Activated CD4-positive, alpha-beta T cell treated with anti-CD3 and anti-CD28 coated beads, Interleukin-2, amount 10 ng/mL, durations not matched to agents 7 days and 5 days (primary cell): ENCODE measurements at regions of chr2 and their contacts with region 1.

Region 1: DNA sequence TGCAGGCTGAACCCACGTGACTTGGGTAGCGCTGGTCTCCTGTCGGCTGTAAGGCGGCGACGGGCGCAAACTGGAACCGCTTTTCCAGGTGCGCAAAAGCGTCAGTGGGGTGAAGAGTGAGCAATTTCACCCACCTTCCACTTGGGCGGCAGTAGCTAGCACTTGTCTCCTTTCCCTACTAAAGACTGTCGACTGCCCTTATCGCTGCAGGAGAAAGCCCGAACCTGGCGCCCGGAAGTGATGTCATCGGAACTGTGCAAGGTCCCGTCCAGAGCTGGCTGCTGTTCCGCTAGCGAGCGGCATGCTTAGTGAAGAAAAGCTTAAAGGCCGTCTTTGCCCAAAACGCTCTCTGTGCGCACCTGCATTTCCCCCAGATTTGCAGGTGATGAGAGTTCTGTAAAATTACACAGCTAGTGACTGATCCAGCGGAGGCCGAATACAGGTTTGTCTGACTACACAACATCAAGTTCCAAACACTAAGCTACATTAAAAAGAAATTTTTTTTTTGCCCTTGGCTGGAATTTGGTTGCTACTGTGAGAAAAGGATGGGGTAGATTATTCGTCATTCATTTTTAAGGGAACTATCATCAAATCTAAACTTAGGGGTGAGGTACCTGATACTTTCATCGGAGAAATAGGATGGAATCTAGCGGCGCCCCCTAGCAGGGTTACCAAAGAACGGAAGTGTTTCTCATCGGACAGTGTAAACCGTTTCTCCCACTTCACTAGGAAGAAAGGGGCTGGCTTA is at the start of gene OSGEPL1:
- DNase-seq: peak; percentile 96
- H3K4me3 Mint-ChIP-seq: peak within 1 kb of the TSS; percentile 90
- H3K27ac Mint-ChIP-seq: peak within 1 kb of the TSS; percentile 98
- H3K4me1 Mint-ChIP-seq: peaks cover 18% of the 10 kb centered on the region
- H3K27me3 Mint-ChIP-seq: no peaks in the 10 kb centered on the region
- total RNA-seq, gene OSGEPL1: 7.7 to 7.8 TPM

Region 2: DNA sequence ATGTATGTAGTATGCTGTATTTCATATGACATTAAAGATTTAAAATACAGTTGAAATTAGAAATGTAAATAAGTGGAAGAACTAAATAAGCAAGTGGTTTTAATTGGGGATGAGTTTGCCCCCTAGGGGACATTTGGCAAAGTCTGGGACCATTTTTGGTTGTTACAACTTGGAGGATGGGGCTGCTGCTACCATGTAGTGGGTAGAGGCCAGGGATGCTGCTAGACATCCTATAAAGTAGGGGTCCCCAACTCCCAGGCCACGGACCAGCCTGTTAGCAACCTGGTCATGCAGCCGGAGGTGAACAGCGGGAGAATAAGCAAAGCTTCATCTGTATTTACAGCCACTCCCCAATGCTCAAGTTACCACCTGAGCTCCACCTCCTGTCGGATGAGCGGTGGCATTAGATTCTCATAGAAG is 129.3 kb before region 1 on chr2:
- CTCF ChIA-PET with region 1: no interaction called
- POLR2A ChIA-PET with region 1: no interaction called
- DNase-seq: peak; percentile 22
- H3K4me3 Mint-ChIP-seq: no peak overlapping the region
- H3K27ac Mint-ChIP-seq: no peak overlapping the region
- H3K4me1 Mint-ChIP-seq: peaks cover 4% of the 10 kb centered on the region
- H3K27me3 Mint-ChIP-seq: no peaks in the 10 kb centered on the region

Region 3: DNA sequence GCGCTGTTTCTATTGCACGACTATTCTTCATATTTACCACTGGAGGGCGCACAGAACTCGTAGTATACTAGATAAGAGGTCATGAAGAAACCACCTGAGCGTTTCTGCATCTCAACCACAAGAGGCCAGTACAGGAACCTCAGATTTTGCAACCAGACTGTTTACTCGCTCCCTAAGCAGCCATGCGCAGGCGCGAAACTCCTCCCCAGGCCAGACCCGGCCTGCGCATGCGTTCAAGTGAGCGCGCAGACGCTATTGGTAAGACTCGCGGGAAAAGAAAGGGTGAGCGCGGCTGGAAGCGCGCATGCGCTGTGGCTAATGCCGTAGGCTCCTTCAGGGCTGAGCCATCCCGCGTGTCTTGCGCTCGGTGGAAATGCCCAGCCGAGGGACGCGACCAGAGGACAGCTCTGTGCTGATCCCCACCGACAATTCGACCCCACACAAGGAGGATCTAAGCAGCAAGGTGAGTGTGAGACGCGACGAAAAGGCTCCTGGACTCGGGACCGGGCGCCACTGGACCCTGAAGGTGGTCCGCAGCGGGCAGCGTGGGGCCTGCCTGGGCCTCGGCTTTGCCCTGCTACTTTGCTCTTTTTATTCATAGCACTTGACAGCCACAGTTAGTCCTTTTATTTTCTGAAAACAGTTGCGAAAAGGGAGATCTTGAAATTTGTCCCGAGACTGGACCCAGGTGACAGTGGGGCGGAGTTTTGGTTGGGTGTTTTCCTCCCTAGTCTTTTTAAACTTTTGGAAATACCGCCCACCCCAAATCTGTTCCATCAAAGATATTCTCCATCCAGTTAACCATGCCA is 101.4 kb before region 1 on chr2 and contains the start of gene ASNSD1:
- CTCF ChIA-PET with region 1: interaction called, 37 read pairs
- POLR2A ChIA-PET with region 1: no interaction called
- DNase-seq: peak; percentile 99
- H3K4me3 Mint-ChIP-seq: no peak within 1 kb of the TSS
- H3K27ac Mint-ChIP-seq: no peak within 1 kb of the TSS
- H3K4me1 Mint-ChIP-seq: peaks cover 54% of the 10 kb centered on the region
- H3K27me3 Mint-ChIP-seq: no peaks in the 10 kb centered on the region
- total RNA-seq, gene ASNSD1: 34.8 to 40.3 TPM

Region 4: DNA sequence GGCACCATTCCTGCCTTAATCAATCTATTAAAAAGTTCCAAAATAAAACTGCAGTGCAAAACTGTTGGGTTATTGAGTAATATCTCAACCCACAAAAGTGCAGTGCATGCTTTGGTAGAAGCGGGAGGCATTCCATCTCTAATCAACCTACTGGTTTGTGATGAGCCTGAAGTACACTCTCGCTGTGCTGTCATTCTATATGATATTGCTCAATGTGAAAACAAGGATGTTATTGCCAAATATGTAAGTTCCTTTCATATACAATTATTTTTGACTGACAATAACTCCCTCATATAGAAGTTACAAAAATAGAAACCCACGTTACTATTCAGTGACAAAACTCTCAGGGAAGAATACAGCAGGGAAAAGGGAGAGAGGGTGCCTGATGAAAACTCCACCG is 43.2 kb before region 1 on chr2:
- CTCF ChIA-PET with region 1: no interaction called
- POLR2A ChIA-PET with region 1: no interaction called
- DNase-seq: no peak
- H3K4me3 Mint-ChIP-seq: no peak overlapping the region
- H3K27ac Mint-ChIP-seq: no peak overlapping the region
- H3K4me1 Mint-ChIP-seq: no peaks in the 10 kb centered on the region
- H3K27me3 Mint-ChIP-seq: no peaks in the 10 kb centered on the region

Region 5: GRCh38 chr2:189783927-189784867 is 21.5 kb after region 1 on chr2 and contains the starts of genes ORMDL1 and PMS1:
- CTCF ChIA-PET with region 1: interaction called, 12 read pairs
- POLR2A ChIA-PET with region 1: interaction called, 5 read pairs
- DNase-seq: peak; percentile 93
- H3K4me3 Mint-ChIP-seq: peak within 1 kb of the TSS; percentile 96
- H3K27ac Mint-ChIP-seq: peak within 1 kb of the TSS; percentile 98
- H3K4me1 Mint-ChIP-seq: peaks cover 51% of the 10 kb centered on the region
- H3K27me3 Mint-ChIP-seq: no peaks in the 10 kb centered on the region
- total RNA-seq, gene ORMDL1: 65.6 to 81.1 TPM
- total RNA-seq, gene PMS1: 26.7 to 35.0 TPM